Activated CD4-positive, alpha-beta memory T cell treated with anti-CD3 and anti-CD28 coated beads, Interleukin-2, amount 10 ng/mL, durations not matched to agents 7 days and 5 days (primary cell): ENCODE measurements at regions of chr3 and their contacts with region 1.

Region 1: DNA sequence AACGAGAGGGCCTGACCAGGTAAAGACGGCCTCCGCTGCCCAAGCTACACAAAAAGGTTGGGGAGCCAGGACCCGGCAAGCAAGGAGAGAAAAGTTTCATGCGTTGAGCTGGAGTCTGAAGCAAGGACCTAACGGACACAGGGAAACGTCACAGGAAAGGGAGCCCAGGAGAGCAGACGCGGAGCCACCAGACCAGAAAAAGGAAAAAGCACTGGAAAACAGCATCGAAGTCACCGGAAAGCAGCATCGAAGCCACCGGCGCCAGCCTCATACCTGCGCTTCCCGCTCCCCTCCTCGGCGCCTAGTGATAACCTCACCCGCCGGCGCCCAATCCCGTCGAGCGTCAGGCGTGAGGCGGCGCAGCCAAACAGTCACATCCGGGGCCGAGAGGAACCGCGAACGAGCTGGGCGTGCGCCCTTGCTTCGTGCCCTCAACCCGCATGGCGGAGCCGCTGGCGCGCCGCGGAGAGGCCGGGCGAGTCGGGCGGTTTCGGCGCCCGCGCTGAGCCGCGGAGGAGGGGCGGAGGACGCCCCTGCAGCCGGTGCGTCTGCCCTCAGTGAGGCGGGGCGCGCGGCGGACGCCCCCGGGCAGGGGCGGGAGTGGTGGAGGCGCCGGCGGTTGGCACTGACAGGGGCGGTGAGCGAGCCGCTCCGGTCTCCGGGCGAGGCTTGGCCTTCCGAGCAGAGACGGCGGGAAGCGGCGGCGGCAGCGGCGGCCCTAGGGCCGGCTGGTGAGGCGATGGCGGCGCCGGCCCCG is at the starts of genes FBXO45 and WDR53:
- DNase-seq: peak; percentile 97
- H3K4me3 Mint-ChIP-seq: peak within 1 kb of the TSS; percentile 97
- H3K27ac Mint-ChIP-seq: peak within 1 kb of the TSS; percentile 95
- H3K4me1 Mint-ChIP-seq: peaks cover 54% of the 10 kb centered on the region
- H3K27me3 Mint-ChIP-seq: no peaks in the 10 kb centered on the region
- total RNA-seq, gene FBXO45: 19.7 TPM
- total RNA-seq, gene WDR53: 27.2 to 29.3 TPM

Region 2: DNA sequence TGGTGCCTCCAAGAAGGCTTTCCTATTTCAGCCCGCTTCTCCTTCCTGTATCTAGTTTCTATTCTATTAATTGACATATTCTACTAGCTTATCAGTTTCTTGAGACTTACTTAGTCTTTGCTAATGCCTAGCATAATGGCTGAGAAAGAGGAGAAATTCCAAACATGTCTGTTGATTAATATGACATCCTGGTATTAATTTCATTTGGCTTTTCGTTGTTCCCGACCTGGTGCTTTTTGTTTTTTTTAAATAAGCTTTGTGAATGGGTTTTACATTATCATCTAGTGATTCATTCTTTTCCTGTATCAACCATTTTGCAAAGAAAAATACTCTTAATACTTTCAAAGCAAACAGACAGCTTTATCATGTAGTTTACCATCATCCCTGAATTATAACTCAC is 13.1 kb before region 1 on chr3:
- CTCF ChIA-PET with region 1: no interaction called
- POLR2A ChIA-PET with region 1: interaction called, 12 read pairs
- DNase-seq: no peak
- H3K4me3 Mint-ChIP-seq: no peak overlapping the region
- H3K27ac Mint-ChIP-seq: no peak overlapping the region
- H3K4me1 Mint-ChIP-seq: peaks cover 14% of the 10 kb centered on the region
- H3K27me3 Mint-ChIP-seq: no peaks in the 10 kb centered on the region

Region 3: DNA sequence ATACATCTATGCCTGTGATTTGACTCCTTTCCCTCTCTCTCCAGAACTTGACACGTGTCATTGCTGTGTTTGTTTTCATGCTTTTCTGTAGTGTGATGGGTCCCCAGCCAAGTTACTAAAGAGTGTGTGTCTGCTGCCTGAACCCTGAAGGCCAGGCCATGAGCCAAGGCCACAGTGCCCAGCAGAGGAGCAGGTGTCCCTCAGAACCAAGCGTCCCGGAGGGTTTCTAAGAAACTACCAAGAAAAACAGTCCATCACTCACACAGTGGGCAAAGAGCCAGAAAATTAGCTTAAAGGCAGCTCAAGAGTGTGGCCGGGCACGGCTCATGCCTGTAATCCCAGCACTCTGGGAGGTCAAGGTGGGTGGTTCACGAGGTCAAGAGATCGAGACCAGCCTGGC is 35.3 kb after region 1 on chr3:
- CTCF ChIA-PET with region 1: interaction called, 11 read pairs
- POLR2A ChIA-PET with region 1: interaction called, 11 read pairs
- DNase-seq: no peak
- H3K4me3 Mint-ChIP-seq: no peak overlapping the region
- H3K27ac Mint-ChIP-seq: no peak overlapping the region
- H3K4me1 Mint-ChIP-seq: peaks cover 17% of the 10 kb centered on the region
- H3K27me3 Mint-ChIP-seq: peaks cover 6% of the 10 kb centered on the region

Region 4: DNA sequence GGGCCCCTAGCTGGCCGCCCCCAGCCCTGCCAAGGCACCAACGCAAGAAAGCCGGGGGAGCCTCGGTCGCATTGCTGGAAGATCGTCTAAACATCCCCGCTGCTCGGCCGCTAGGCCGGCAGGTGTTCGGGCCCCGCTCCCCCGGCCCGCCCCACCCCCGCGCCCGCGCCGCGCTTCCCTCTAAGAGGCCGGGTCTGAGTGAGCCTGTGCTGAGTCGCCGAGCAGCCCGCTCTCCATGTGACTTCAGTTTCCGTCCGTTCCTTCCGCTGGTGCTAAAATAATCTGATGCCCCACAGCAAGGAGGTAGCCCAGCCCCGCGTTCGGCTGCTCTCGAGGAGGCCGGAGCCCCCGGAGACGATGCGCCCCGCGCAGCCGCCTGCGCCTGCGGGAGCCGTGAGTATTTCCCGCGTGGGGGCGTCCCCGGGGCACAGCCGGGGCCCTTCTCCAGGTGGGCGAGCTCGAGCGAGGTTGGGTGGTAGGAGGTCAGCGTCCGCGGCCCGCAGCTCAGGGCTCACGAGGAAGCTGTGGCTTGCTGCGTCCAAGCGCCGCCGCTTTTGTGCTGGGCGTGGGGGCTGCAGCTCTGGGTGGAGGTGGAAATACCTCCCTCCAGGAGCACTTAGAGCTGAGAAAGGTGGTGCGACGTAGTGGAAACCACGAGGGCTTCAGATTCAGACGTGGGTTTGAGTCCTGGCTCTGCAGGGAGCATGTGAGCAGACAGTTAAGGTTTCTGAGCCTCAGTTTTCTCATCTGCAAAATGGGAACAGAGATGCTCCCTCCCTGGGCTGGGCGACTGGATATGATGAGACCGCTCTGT is 71.3 kb after region 1 on chr3 and contains the start of gene NRROS:
- CTCF ChIA-PET with region 1: interaction called, 5 read pairs
- POLR2A ChIA-PET with region 1: interaction called, 10 read pairs
- DNase-seq: peak; percentile 82
- H3K4me3 Mint-ChIP-seq: peak within 1 kb of the TSS; percentile 73
- H3K27ac Mint-ChIP-seq: peak within 1 kb of the TSS; percentile 86
- H3K4me1 Mint-ChIP-seq: peaks cover 65% of the 10 kb centered on the region
- H3K27me3 Mint-ChIP-seq: no peaks in the 10 kb centered on the region
- total RNA-seq, gene NRROS: 50.1 to 52.8 TPM

Region 5: GRCh38 chr3:196942226-196942914 is 373.9 kb after region 1 on chr3 and contains the start of gene NCBP2:
- CTCF ChIA-PET with region 1: no interaction called
- POLR2A ChIA-PET with region 1: interaction called, 24 read pairs
- DNase-seq: peak; percentile 100
- H3K4me3 Mint-ChIP-seq: peak within 1 kb of the TSS; percentile 90
- H3K27ac Mint-ChIP-seq: peak within 1 kb of the TSS; percentile 98
- H3K4me1 Mint-ChIP-seq: peaks cover 58% of the 10 kb centered on the region
- H3K27me3 Mint-ChIP-seq: no peaks in the 10 kb centered on the region
- total RNA-seq, gene NCBP2: 54.6 to 55.6 TPM